ENCODE measurements at regions of chr3 and their contacts with region 1.

Region 1: DNA sequence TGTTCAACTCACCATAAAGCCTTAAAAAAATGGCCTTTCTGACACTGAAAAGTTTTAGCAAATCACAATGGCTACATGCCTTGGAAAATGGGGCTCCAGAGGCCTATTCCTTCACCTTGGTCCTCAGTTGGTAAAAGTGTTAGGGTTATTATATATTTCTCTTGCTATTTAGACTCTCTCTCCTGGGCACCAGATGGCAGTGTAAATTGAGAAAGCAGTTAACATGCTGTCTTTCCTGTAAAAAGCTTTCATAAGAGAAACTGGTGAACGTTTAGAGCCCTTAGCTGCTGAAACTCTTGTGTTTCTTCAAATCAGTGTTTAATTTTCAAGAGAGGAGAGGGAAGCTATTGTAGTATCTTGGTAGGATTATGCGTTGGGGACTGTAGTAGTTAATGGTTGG is 89.9 kb downstream of the LRTM1 start:
- DNase-seq: no peak
- H3K4me3 ChIP-seq: no peak overlapping the region
- CTCF ChIP-seq: peak; percentile 9

Region 2: GRCh38 chr3:54853573-54854404 is 15.8 kb after region 1 on chr3:
- CTCF ChIA-PET with region 1: interaction called, 13 read pairs
- POLR2A ChIA-PET with region 1: no interaction called
- DNase-seq: no peak
- H3K4me3 ChIP-seq: no peak overlapping the region
- CTCF ChIP-seq: peak; percentile 94

Region 3: GRCh38 chr3:54957711-54958110 is 119.7 kb after region 1 on chr3:
- CTCF ChIA-PET with region 1: no interaction called
- POLR2A ChIA-PET with region 1: no interaction called
- DNase-seq: no peak
- H3K4me3 ChIP-seq: no peak overlapping the region
- CTCF ChIP-seq: no peak